ENCODE measurements at regions of chr18 and their contacts with region 1.

Region 1: GRCh38 chr18:50819728-50820378 is at the start of gene MRO:
- DNase-seq: peak; percentile 87
- H3K4me3 ChIP-seq: peak within 1 kb of the TSS; percentile 12
- H3K27ac ChIP-seq: no peak within 1 kb of the TSS
- H3K4me1 ChIP-seq: peaks cover 9% of the 10 kb centered on the region
- H3K27me3 ChIP-seq: no peaks in the 10 kb centered on the region
- CTCF ChIP-seq: peak; percentile 92
- total RNA-seq, gene MRO: 0.05 to 0.21 TPM

Region 2: GRCh38 chr18:50850307-50851065 is 30.6 kb after region 1 on chr18:
- intact Hi-C with region 1: loop called (anchors 2 kb)
- DNase-seq: no peak
- H3K4me3 ChIP-seq: no peak overlapping the region
- H3K27ac ChIP-seq: no peak overlapping the region
- H3K4me1 ChIP-seq: no peaks in the 10 kb centered on the region
- H3K27me3 ChIP-seq: no peaks in the 10 kb centered on the region
- CTCF ChIP-seq: no peak

Region 3: GRCh38 chr18:50870138-50870845 is 50.4 kb after region 1 on chr18:
- intact Hi-C with region 1: loop called (anchors 5 kb)
- DNase-seq: no peak
- H3K4me3 ChIP-seq: no peak overlapping the region
- H3K27ac ChIP-seq: peak overlapping the region; percentile 6
- H3K4me1 ChIP-seq: no peaks in the 10 kb centered on the region
- H3K27me3 ChIP-seq: no peaks in the 10 kb centered on the region
- CTCF ChIP-seq: no peak

Region 4: DNA sequence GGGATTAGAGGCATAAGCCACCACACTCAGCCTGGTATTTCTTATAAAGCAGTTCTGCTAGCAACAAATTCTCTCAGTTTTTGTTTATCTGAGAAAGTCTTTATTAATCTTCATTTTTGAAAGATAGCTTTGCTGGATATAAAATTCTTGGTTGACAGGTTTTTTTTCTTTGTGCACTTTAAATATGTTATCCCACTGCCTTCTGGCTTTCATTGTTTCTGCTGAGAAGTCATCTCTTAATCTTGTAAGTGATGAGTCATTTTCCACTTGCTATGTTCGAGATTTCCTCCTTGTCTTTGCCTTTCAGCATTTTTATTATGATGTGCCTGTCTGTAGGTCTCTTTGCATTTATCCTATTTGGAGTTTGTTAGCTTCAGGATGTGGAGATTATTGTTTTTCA is 142.1 kb after region 1 on chr18:
- intact Hi-C with region 1: no loop called
- DNase-seq: no peak
- H3K4me3 ChIP-seq: no peak overlapping the region
- H3K27ac ChIP-seq: no peak overlapping the region
- H3K4me1 ChIP-seq: no peaks in the 10 kb centered on the region
- H3K27me3 ChIP-seq: no peaks in the 10 kb centered on the region
- CTCF ChIP-seq: no peak

Region 5: DNA sequence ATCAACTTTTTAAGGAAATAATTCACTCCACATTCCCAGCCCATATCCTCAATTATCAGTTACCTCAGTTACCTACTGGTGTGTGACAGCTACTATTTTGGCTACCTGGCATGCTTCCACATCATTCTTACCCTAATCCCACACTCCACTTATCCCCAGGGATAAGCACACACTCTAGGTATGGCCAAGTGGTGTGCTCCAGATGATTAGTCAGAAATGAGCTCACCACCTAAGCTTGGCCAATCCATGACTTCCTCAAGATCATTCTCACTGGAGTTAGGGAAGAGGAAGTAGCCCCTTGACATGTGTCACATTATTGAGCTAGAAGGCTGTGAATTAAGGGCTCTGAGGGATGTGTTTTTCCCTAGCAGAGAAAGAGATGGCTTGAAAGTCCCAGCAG is 189.2 kb after region 1 on chr18:
- intact Hi-C with region 1: no loop called
- DNase-seq: no peak
- H3K4me3 ChIP-seq: no peak overlapping the region
- H3K27ac ChIP-seq: no peak overlapping the region
- H3K4me1 ChIP-seq: no peaks in the 10 kb centered on the region
- H3K27me3 ChIP-seq: no peaks in the 10 kb centered on the region
- CTCF ChIP-seq: no peak

Region 6: DNA sequence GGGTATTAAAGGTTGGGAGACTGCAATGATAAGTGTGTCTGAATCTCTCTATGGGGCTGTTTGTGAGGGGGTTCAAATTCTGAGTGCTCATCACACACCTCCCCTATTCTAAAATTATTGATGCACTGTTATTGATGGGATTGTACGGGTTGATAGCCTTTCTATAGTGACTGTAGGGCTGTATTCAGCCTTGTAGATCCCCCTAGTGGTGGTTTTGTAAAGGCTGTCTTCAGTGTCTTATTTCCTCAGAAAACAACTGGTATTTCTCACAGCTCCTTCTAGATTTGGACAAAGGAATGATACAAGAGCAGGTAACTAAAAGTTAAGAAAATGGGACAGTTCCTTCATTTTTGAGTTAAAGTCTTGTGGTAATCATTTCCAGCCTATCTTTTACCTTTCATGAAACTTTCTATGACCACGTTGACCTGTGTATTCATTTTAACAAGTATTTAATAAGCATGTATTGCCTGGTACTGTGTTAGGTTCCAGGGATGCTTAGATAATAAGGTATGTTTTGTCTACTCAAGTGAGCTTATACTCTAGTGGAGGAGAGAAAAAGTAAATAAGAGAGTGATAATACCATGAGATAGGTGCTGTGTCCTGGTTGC is 231.4 kb after region 1 on chr18:
- intact Hi-C with region 1: loop called (anchors 2 kb)
- DNase-seq: no peak
- H3K4me3 ChIP-seq: no peak overlapping the region
- H3K27ac ChIP-seq: no peak overlapping the region
- H3K4me1 ChIP-seq: no peaks in the 10 kb centered on the region
- H3K27me3 ChIP-seq: no peaks in the 10 kb centered on the region
- CTCF ChIP-seq: peak; percentile 79